Dorsolateral prefrontal cortex (tissue), 120 donors: ENCODE measurements at regions of chr2 and their contacts with region 1.

Region 1: DNA sequence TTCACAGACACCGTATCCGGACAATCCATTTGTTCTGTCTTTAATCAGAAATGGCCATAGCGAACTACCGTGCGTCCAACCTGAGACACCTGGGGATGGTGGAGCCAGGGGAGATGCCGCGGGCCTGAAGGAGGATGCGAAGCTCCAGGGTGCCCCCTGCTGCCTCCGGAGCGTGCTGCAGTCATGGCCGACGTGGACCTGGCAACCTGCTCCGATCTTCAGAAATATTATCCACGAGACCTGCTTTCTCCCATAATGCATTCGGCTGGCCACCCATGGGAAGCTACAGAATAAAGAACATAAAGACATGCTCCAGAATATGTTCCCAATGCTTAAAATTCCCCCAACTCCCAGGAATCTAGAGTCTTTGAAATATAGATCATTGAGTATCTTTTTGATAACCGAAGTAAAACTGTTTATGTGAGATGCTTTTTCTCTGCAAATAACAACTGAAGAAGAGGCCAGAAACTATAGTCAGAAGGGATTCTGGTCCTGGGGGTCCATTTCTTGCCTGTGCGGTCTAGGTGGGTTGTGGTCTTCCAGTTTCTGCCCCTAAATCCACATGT is 30.7 kb upstream of the SLC66A3 start:
- DNase-seq: peak; percentile 58 to 84 (median 74)
- H3K4me3 ChIP-seq: no peak overlapping the region
- H3K27ac ChIP-seq: peak overlapping the region in 1 of 59 donors; percentile 7
- H3K27me3 ChIP-seq: no peaks in the 10 kb centered on the region
- CTCF ChIP-seq: peak; percentile 35 to 88 (median 78)

Region 2: DNA sequence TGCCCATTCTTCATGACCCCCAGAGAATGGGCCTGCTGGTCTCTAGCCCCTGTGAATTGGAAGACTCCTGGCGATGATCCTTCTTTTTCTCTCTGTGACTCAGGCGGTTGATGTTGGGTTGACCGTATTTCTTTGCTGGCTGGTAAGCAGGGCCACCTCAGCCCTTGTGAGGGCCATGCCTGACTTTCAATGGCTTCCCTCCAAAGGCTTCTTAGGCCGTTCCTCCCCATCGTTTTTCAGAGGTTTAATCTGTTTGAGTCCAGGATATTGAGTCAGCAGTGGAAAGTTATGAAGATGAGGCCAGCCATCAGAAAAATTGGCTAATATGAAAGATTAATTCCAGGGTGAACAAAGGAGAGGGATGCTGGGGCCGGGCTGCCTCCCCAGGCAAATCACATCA is 808.2 kb before region 1 on chr2:
- intact Hi-C with region 1: no loop called
- DNase-seq: no peak
- H3K4me3 ChIP-seq: no peak overlapping the region
- H3K27ac ChIP-seq: peak overlapping the region in 4 of 59 donors; percentile 0 to 52 (median 32)
- H3K27me3 ChIP-seq: no peaks in the 10 kb centered on the region
- CTCF ChIP-seq: no peak

Region 3: GRCh38 chr2:10832203-10832936 is 292.2 kb before region 1 on chr2:
- intact Hi-C with region 1: loop called (anchors 1 to 2 kb)
- DNase-seq: peak; percentile 73 to 88 (median 86)
- H3K4me3 ChIP-seq: peak overlapping the region in 32 of 59 donors; percentile 0 to 42 (median 24)
- H3K27ac ChIP-seq: peak overlapping the region in 32 of 59 donors; percentile 2 to 80 (median 52)
- H3K27me3 ChIP-seq: peaks cover 0 to 8% (median 0%) of the 10 kb centered on the region in 45 donors
- CTCF ChIP-seq: peak; percentile 83 to 99 (median 97)

Region 4: GRCh38 chr2:10911261-10912075 is 213.1 kb before region 1 on chr2 and contains the start of gene KCNF1:
- intact Hi-C with region 1: loop called (anchors 5 to 10 kb)
- DNase-seq: peak in 3 of 10 donors; percentile 53 to 65 (median 63)
- H3K4me3 ChIP-seq: peak within 1 kb of the TSS; percentile 25 to 70 (median 56)
- H3K27ac ChIP-seq: peak within 1 kb of the TSS in 50 of 59 donors; percentile 13 to 86 (median 70)
- H3K27me3 ChIP-seq: peaks cover 0 to 38% (median 6%) of the 10 kb centered on the region in 45 donors
- CTCF ChIP-seq: peak in 23 of 56 donors; percentile 8 to 40 (median 18)
- total RNA-seq, gene KCNF1: 16.9 to 84.7 (median 42.5) TPM

Region 5: DNA sequence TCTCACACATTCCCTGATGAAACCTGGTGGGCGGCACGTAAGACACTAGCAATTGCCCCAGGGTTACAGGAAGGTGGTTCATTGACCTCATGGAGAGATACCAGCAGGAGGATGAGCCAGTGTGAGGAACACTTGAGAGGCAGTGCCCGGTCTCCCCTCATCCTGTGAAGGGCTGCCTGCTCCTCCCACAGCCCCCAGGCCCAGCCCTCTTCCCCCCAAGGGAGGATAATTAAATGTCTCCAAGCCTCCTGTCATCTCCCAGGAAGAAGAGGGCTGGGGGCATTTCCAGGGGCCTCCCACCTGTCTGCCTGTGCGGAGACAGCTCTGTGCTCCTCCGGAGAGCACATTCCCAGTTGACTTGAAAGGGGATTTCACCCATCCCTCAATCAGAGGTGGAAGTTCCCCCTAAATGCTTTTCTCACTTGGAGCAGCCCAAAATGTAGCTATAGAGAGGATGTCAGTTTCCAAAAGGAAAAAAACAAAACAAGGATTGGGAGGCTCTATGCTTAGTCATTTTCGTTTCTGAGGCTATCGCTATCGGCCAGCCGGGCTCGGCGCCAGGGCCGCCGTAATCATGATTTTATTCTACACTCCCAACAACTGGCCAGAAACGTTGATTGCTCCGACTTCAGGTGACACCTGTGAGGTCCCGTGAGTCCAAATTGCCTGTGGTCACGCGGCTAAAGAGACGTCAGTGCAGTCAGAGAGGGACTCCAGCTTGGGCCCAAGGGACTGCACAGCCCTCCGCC is 205.8 kb before region 1 on chr2:
- intact Hi-C with region 1: loop called (anchors 5 to 10 kb)
- DNase-seq: peak in 2 of 10 donors; percentile 68 to 75
- H3K4me3 ChIP-seq: peak overlapping the region in 14 of 59 donors; percentile 2 to 33 (median 6)
- H3K27ac ChIP-seq: peak overlapping the region in 57 of 59 donors; percentile 28 to 90 (median 76)
- H3K27me3 ChIP-seq: peaks cover 0 to 8% (median 0%) of the 10 kb centered on the region in 45 donors
- CTCF ChIP-seq: no peak